Colonic mucosa (tissue), 4 donors: ENCODE measurements at regions of chr20 and their contacts with region 1.

Region 1: DNA sequence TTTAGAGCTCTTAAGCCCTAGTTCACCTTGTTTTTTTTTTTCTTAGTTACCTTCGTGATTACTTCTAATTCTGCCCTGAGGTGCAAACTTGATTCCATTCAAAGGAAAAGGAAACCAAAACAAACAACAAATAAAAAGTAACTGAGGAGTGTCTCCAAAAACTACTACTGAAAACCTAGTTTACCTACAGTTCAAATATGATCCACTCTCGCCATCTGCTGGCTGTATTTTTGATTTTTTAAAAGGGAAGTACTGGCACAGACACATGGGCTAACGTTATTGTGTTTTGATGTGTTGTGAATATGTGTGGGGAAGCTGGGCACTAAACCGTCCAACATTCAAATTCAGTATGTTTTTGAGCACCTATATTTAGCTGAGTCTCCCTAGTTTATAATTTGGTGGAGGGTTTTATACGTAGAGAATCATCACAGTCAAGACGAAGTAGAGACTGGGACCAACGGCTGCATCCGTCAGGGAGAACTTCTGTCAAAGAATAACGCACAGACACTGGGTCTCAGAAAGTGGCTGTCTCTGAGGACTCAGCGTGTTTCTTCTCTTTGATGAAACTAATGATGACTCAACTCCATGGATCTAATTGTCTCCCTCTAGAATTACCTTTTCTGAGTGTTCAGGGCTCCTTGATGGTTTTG is 373.5 kb upstream of the BTBD3 start:
- DNase-seq: peak; percentile 57
- H3K4me3 ChIP-seq: no peak overlapping the region
- H3K27ac ChIP-seq: no peak overlapping the region
- H3K4me1 ChIP-seq: no peaks in the 10 kb centered on the region
- H3K27me3 ChIP-seq: no peaks in the 10 kb centered on the region
- CTCF ChIP-seq: peak; percentile 55

Region 2: GRCh38 chr20:10469599-10469998 is 1074.6 kb before region 1 on chr20:
- intact Hi-C with region 1: loop called (anchors 10 kb)
- DNase-seq: peak; percentile 44
- H3K4me3 ChIP-seq: no peak overlapping the region
- H3K27ac ChIP-seq: no peak overlapping the region
- H3K4me1 ChIP-seq: no peaks in the 10 kb centered on the region
- H3K27me3 ChIP-seq: no peaks in the 10 kb centered on the region
- CTCF ChIP-seq: peak; percentile 48

Region 3: DNA sequence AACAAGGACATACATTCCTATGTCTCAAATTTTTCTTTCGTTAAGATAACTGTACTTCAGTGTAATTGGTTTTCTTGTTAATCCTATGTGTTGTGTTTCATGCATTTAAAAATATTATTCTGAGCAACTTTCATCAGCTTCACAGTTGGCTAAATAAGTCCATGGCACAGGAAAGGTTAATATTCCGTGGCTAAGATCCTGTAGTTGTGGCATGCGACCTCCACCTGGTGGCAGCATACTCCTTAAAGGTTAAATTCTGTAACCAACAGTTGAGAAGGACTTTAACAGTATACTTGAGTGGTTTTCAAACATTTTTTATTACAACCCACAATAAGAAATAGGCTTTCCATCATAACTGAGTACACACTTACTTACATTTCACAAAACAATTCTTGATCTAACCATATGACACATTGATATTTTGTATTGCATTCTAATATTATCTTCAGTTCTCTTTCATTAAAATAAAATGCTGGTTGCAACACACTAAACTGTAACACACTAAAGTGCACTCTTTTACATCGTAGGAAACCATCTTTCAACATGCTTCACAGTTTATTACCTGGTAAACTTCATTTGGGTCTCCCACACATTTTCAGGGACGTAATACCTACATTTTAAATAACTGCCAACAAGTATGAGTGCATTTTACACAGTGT is 990.7 kb before region 1 on chr20:
- intact Hi-C with region 1: loop called (anchors 5 kb)
- DNase-seq: peak; percentile 70
- H3K4me3 ChIP-seq: no peak overlapping the region
- H3K27ac ChIP-seq: no peak overlapping the region
- H3K4me1 ChIP-seq: no peaks in the 10 kb centered on the region
- H3K27me3 ChIP-seq: no peaks in the 10 kb centered on the region
- CTCF ChIP-seq: peak; percentile 84